Posterior vena cava (tissue), 2 donors: ENCODE measurements at regions of chr21 and their contacts with region 1.

Region 1: GRCh38 chr21:22319435-22319834 is 1321.2 kb downstream of the NCAM2 start:
- DNase-seq: no peak

Region 2: GRCh38 chr21:22342889-22343288 is 23.5 kb after region 1 on chr21:
- intact Hi-C with region 1: loop called in 1 of 2 experiments (anchors 1 kb)
- DNase-seq: no peak